ENCODE measurements at regions of chr7 and their contacts with region 1.

Region 1: DNA sequence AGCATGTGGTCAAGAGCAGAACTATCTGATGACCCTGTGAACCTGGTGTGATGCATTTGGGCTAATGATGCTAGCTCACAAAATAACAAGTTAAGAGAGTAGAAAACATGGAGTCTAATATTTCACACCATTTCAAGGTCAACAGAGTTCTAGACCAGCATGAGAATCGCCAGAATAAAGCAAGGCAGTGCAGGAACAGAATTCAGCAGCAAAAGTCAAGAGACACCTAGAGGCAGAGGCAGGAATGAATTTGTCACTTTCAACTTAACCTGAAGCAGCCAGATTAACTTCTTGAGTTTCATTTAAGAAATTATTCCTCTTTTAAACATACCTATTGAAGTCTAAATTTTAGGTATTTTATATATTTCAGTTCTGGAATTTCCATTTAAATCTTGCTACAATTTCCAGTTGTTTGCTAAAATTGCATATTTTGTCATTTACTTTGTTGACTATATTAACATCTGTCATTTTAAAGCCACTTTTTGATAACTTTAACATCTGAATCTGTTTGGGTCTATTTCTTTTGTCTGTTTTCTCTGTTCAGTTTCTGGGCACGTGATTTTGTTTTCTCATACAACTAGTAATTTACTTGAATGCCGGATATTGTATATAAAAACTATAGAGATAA is 44.2 kb upstream of the PRSS58 start:
- DNase-seq: peak; percentile 22
- H3K4me3 ChIP-seq: no peak overlapping the region
- H3K27ac ChIP-seq: no peak overlapping the region
- H3K4me1 ChIP-seq: no peaks in the 10 kb centered on the region
- H3K27me3 ChIP-seq: peaks cover 28% of the 10 kb centered on the region; the same call in 1 of the 2 replicates
- CTCF ChIP-seq: peak; percentile 69
- EP300 ChIP-seq: no peak
- RAD21 ChIP-seq: peak; percentile 31

Region 2: GRCh38 chr7:142177869-142178268 is 124.2 kb before region 1 on chr7:
- CTCF ChIA-PET with region 1: no interaction called
- POLR2A ChIA-PET with region 1: no interaction called
- DNase-seq: no peak
- H3K4me3 ChIP-seq: no peak overlapping the region
- H3K27ac ChIP-seq: no peak overlapping the region
- H3K4me1 ChIP-seq: no peaks in the 10 kb centered on the region
- H3K27me3 ChIP-seq: peaks cover 4% of the 10 kb centered on the region
- CTCF ChIP-seq: no peak
- EP300 ChIP-seq: no peak
- RAD21 ChIP-seq: no peak

Region 3: GRCh38 chr7:142313528-142313927 is 11.5 kb after region 1 on chr7:
- CTCF ChIA-PET with region 1: interaction called, 14 read pairs
- POLR2A ChIA-PET with region 1: no interaction called
- DNase-seq: no peak
- H3K4me3 ChIP-seq: no peak overlapping the region
- H3K27ac ChIP-seq: no peak overlapping the region
- H3K4me1 ChIP-seq: no peaks in the 10 kb centered on the region
- H3K27me3 ChIP-seq: peaks cover 57% of the 10 kb centered on the region; the same call in 1 of the 2 replicates
- CTCF ChIP-seq: no peak
- EP300 ChIP-seq: no peak
- RAD21 ChIP-seq: no peak

Region 4: GRCh38 chr7:142323706-142324105 is 21.7 kb after region 1 on chr7:
- CTCF ChIA-PET with region 1: interaction called, 13 read pairs
- POLR2A ChIA-PET with region 1: no interaction called
- DNase-seq: peak; percentile 49
- H3K4me3 ChIP-seq: no peak overlapping the region
- H3K27ac ChIP-seq: no peak overlapping the region
- H3K4me1 ChIP-seq: no peaks in the 10 kb centered on the region
- H3K27me3 ChIP-seq: peaks cover 8% of the 10 kb centered on the region; the same call in 1 of the 2 replicates
- CTCF ChIP-seq: peak; percentile 52
- EP300 ChIP-seq: no peak
- RAD21 ChIP-seq: no peak; the same call in 1 of the 2 replicates

Region 5: DNA sequence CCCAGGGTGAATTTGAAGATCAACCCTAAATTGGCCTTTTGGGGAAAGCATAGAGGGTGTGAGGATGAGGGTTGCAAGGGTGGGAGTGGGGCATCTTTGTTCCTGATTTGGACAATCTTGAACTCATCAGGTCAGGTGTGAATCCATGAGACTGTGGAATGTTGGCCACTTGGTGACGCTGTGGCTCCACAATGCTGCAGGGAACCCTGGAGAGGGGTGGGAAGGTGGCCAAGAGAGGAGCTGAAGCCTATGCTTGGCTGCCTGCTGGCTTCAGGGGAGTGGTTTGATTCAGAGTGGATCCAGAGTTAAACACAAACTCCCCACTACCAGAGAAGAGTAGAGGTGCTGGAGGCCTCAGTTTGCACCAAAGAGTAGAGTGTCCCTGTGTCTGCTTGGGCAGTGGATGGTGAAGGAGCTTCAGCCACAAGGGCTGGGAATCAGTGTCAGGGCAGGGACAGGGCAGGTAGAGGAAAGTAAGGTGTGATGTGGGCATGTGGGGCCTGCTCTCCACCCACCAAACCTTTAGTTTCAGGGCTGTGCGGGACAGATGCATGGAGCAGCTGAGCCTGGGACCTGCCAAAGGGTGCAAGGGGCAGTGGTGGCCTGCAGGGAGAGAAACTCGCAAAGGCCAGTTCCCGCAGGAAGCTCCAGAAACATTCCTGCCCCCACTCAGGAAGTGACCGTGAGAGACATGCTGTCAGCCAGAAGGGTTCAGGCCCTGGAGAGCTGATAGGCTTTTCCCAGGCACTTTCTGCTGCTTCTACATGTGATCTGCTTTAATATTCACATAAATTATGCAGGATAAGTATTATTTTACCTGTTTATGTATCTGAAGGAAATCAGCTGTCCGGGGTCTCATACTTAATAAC is 36.8 kb after region 1 on chr7:
- CTCF ChIA-PET with region 1: interaction called, 14 read pairs
- POLR2A ChIA-PET with region 1: no interaction called
- DNase-seq: no peak
- H3K4me3 ChIP-seq: peak overlapping the region in 1 of 2 experiments; percentile 27; a peak in 1 of 4 replicates
- H3K27ac ChIP-seq: no peak overlapping the region
- H3K4me1 ChIP-seq: no peaks in the 10 kb centered on the region
- H3K27me3 ChIP-seq: peaks cover 47% of the 10 kb centered on the region; the same call in 1 of the 2 replicates
- CTCF ChIP-seq: peak; percentile 46
- EP300 ChIP-seq: no peak
- RAD21 ChIP-seq: 0 out of 2 replicates have a peak, but pooled peaks have one; percentile 8

Region 6: DNA sequence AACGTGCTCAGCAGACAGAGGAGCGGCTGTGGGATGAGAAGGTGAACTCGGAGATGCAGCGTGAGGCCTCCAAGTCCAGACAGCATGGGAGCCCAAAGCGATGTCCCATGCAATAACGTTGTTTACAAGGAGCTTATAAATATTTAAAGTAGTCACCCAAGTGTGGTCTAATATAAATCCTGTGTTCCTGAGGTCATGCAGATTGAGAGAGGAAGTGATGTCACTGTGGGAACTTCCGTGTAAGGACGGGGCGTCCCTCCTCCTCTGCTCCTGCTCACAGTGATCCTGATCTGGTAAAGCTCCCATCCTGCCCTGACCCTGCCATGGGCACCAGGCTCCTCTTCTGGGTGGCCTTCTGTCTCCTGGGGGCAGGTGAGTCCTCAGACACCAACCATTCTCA is 50.5 kb after region 1 on chr7:
- CTCF ChIA-PET with region 1: interaction called, 12 read pairs
- POLR2A ChIA-PET with region 1: no interaction called
- DNase-seq: no peak
- H3K4me3 ChIP-seq: no peak overlapping the region
- H3K27ac ChIP-seq: no peak overlapping the region
- H3K4me1 ChIP-seq: no peaks in the 10 kb centered on the region
- H3K27me3 ChIP-seq: peaks cover 63% of the 10 kb centered on the region
- CTCF ChIP-seq: no peak
- EP300 ChIP-seq: no peak
- RAD21 ChIP-seq: no peak

Region 7: DNA sequence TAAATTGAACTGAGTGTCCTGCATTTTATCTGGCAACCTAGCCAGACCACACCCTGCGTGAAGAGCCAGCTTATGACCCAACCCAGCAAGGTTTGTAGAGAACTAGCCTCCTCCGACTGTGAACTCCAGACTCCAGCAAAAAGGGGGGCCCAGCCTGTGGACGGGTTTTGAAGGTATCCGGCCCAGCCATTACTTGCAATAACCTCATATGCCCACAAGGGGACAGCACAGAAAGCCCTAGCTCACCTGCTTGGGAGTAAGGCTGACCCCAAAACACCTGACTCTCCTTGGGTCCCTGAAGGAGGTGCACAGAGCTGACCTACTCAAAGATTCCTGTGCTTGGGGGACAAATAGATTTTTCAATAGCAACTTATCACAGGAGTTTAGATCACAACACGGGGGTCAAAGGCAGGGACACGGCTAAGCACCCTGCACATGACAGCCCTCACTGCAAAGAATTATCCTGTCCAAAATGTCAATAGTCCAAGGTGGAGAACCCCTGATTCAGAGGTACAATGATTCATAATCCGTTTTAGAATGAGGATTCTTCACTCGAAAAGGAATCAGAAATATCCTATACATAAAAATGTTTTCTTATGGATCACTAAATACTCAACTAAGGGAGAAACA is 579.0 kb after region 1 on chr7:
- CTCF ChIA-PET with region 1: no interaction called
- POLR2A ChIA-PET with region 1: no interaction called
- DNase-seq: peak; percentile 73
- H3K4me3 ChIP-seq: no peak overlapping the region; a peak in 1 of 4 replicates
- H3K27ac ChIP-seq: no peak overlapping the region
- H3K4me1 ChIP-seq: no peaks in the 10 kb centered on the region
- H3K27me3 ChIP-seq: peaks cover 79% of the 10 kb centered on the region
- CTCF ChIP-seq: peak; percentile 75
- EP300 ChIP-seq: no peak
- RAD21 ChIP-seq: peak; percentile 48